ENCODE measurements at regions of chr17 and their contacts with region 1.

Region 1: GRCh38 chr17:54544249-54544648 is 356.4 kb upstream of the TOM1L1 start:
- DNase-seq: no peak
- H3K4me3 ChIP-seq: no peak overlapping the region
- H3K27ac ChIP-seq: no peak overlapping the region
- H3K4me1 ChIP-seq: no peaks in the 10 kb centered on the region
- H3K27me3 ChIP-seq: no peaks in the 10 kb centered on the region

Region 2: GRCh38 chr17:54426296-54426886 is 117.9 kb before region 1 on chr17:
- in situ Hi-C with region 1: loop called (anchors 25 kb)
- DNase-seq: peak; percentile 1
- H3K4me3 ChIP-seq: no peak overlapping the region
- H3K27ac ChIP-seq: no peak overlapping the region
- H3K4me1 ChIP-seq: no peaks in the 10 kb centered on the region
- H3K27me3 ChIP-seq: no peaks in the 10 kb centered on the region

Region 3: DNA sequence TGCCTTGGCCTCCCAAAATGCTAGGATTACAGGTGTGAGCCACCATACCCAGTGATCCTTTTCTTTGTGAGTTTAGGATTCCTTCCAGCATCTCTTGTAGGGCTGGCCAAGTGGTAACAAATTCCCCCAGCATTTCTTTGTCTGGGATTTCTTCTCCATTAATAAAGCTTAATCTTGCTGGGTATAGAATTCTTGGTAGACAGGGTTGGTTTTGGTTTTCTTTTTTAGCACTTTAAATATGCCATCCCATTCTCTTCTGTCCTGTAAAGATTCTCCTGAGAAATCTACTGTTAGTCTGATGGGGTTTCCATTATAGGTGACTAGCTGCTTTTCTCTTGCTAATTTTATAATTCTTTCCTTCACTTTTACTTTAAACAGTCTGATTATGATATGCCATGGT is 183.4 kb after region 1 on chr17:
- in situ Hi-C with region 1: no loop called
- DNase-seq: no peak
- H3K4me3 ChIP-seq: no peak overlapping the region
- H3K27ac ChIP-seq: no peak overlapping the region
- H3K4me1 ChIP-seq: no peaks in the 10 kb centered on the region
- H3K27me3 ChIP-seq: no peaks in the 10 kb centered on the region

Region 4: GRCh38 chr17:54813896-54814295 is 269.6 kb after region 1 on chr17:
- in situ Hi-C with region 1: no loop called
- DNase-seq: no peak
- H3K4me3 ChIP-seq: no peak overlapping the region
- H3K27ac ChIP-seq: no peak overlapping the region
- H3K4me1 ChIP-seq: no peaks in the 10 kb centered on the region
- H3K27me3 ChIP-seq: no peaks in the 10 kb centered on the region

Measured in GM23248 (cell line).